ENCODE measurements at regions of chr11 and their contacts with region 1.

Region 1: GRCh38 chr11:2532704-2533586 is 88.1 kb downstream of the KCNQ1 start:
- DNase-seq: peak; percentile 83 to 90 (median 87)
- H3K4me3 ChIP-seq: peak overlapping the region; percentile 45
- H3K4me3 Mint-ChIP-seq: peak overlapping the region; percentile 56 to 87 (median 70)
- H3K27ac ChIP-seq: peak overlapping the region; percentile 12
- H3K27ac Mint-ChIP-seq: peak overlapping the region in 3 of 8 donors; percentile 21 to 48 (median 29)
- H3K4me1 ChIP-seq: peaks cover 18% of the 10 kb centered on the region
- H3K4me1 Mint-ChIP-seq: peaks cover 11 to 15% (median 12%) of the 10 kb centered on the region in 3 donors
- H3K27me3 ChIP-seq: no peaks in the 10 kb centered on the region
- H3K27me3 Mint-ChIP-seq: peaks cover 1 to 2% of the 10 kb centered on the region in 2 donors

Region 2: GRCh38 chr11:2072551-2073261 is 460.2 kb before region 1 on chr11:
- CTCF ChIA-PET with region 1: no interaction called
- POLR2A ChIA-PET with region 1: no interaction called
- DNase-seq: no peak
- H3K4me3 ChIP-seq: no peak overlapping the region
- H3K4me3 Mint-ChIP-seq: no peak overlapping the region
- H3K27ac ChIP-seq: no peak overlapping the region
- H3K27ac Mint-ChIP-seq: no peak overlapping the region
- H3K4me1 ChIP-seq: no peaks in the 10 kb centered on the region
- H3K4me1 Mint-ChIP-seq: peaks cover 8 to 10% (median 8%) of the 10 kb centered on the region in 3 donors
- H3K27me3 ChIP-seq: no peaks in the 10 kb centered on the region
- H3K27me3 Mint-ChIP-seq: peaks cover 16 to 28% of the 10 kb centered on the region in 2 donors

Region 3: GRCh38 chr11:2305140-2305840 is 227.7 kb before region 1 on chr11:
- CTCF ChIA-PET with region 1: interaction called, 26 read pairs
- POLR2A ChIA-PET with region 1: no interaction called
- DNase-seq: peak; percentile 71 to 88 (median 78)
- H3K4me3 ChIP-seq: peak overlapping the region; percentile 70
- H3K4me3 Mint-ChIP-seq: peak overlapping the region; percentile 77 to 98 (median 94)
- H3K27ac ChIP-seq: peak overlapping the region; percentile 67
- H3K27ac Mint-ChIP-seq: peak overlapping the region; percentile 77 to 97 (median 90)
- H3K4me1 ChIP-seq: peaks cover 53% of the 10 kb centered on the region
- H3K4me1 Mint-ChIP-seq: peaks cover 26 to 68% (median 37%) of the 10 kb centered on the region in 3 donors
- H3K27me3 ChIP-seq: no peaks in the 10 kb centered on the region
- H3K27me3 Mint-ChIP-seq: no peaks in the 10 kb centered on the region

Region 4: DNA sequence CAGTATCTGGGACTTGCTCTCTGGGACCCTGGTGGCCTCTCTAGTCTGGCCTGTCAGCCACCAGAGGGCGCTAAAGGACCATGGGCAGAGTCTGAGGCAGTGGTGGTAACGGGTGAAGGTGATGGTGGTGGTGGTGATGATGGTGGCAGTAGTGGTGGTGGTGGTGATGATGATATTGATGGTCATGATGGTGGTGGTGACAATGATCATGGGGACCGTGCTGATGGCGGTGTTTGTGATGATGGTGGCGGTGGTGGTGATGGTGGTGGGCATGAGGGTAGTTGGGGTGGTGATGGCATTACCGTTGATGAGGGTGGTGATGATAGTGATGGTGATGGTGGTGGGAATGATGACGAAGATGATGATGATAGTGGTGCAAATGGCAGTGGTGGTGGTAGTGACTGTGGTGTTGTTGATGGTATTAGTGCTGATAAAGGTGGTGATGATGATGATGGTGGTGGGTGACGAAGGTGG is 104.6 kb before region 1 on chr11:
- CTCF ChIA-PET with region 1: interaction called, 146 read pairs
- POLR2A ChIA-PET with region 1: no interaction called
- DNase-seq: peak; percentile 72 to 90 (median 82)
- H3K4me3 ChIP-seq: no peak overlapping the region
- H3K4me3 Mint-ChIP-seq: no peak overlapping the region
- H3K27ac ChIP-seq: no peak overlapping the region
- H3K27ac Mint-ChIP-seq: no peak overlapping the region
- H3K4me1 ChIP-seq: no peaks in the 10 kb centered on the region
- H3K4me1 Mint-ChIP-seq: no peaks in the 10 kb centered on the region
- H3K27me3 ChIP-seq: no peaks in the 10 kb centered on the region
- H3K27me3 Mint-ChIP-seq: no peaks in the 10 kb centered on the region

Region 5: GRCh38 chr11:2489083-2489482 is 43.9 kb before region 1 on chr11:
- CTCF ChIA-PET with region 1: no interaction called
- POLR2A ChIA-PET with region 1: no interaction called
- DNase-seq: no peak
- H3K4me3 ChIP-seq: no peak overlapping the region
- H3K4me3 Mint-ChIP-seq: no peak overlapping the region
- H3K27ac ChIP-seq: no peak overlapping the region
- H3K27ac Mint-ChIP-seq: no peak overlapping the region
- H3K4me1 ChIP-seq: no peaks in the 10 kb centered on the region
- H3K4me1 Mint-ChIP-seq: no peaks in the 10 kb centered on the region
- H3K27me3 ChIP-seq: no peaks in the 10 kb centered on the region
- H3K27me3 Mint-ChIP-seq: peaks cover 12 to 36% of the 10 kb centered on the region in 2 donors

Region 6: GRCh38 chr11:2885676-2886081 is 352.7 kb after region 1 on chr11 and contains the start of gene CDKN1C:
- CTCF ChIA-PET with region 1: interaction called, 345 read pairs
- POLR2A ChIA-PET with region 1: interaction called, 3 read pairs
- DNase-seq: peak; percentile 79 to 89 (median 85)
- H3K4me3 ChIP-seq: peak within 1 kb of the TSS; percentile 69
- H3K4me3 Mint-ChIP-seq: peak within 1 kb of the TSS; percentile 82 to 95 (median 89)
- H3K27ac ChIP-seq: peak within 1 kb of the TSS; percentile 24
- H3K27ac Mint-ChIP-seq: peak within 1 kb of the TSS in 7 of 8 donors; percentile 61 to 91 (median 74)
- H3K4me1 ChIP-seq: peaks cover 13% of the 10 kb centered on the region
- H3K4me1 Mint-ChIP-seq: peaks cover 9 to 27% (median 26%) of the 10 kb centered on the region in 3 donors
- H3K27me3 ChIP-seq: no peaks in the 10 kb centered on the region
- H3K27me3 Mint-ChIP-seq: no peaks in the 10 kb centered on the region
- total RNA-seq, gene CDKN1C: 1.0 to 1.1 TPM

Region 7: GRCh38 chr11:2901854-2902783 is 369.2 kb after region 1 on chr11:
- CTCF ChIA-PET with region 1: interaction called, 11 read pairs
- POLR2A ChIA-PET with region 1: no interaction called
- DNase-seq: peak; percentile 80 to 92 (median 91)
- H3K4me3 ChIP-seq: peak overlapping the region; percentile 71
- H3K4me3 Mint-ChIP-seq: peak overlapping the region; percentile 71 to 89 (median 78)
- H3K27ac ChIP-seq: peak overlapping the region; percentile 65
- H3K27ac Mint-ChIP-seq: peak overlapping the region; percentile 36 to 96 (median 69)
- H3K4me1 ChIP-seq: peaks cover 43% of the 10 kb centered on the region
- H3K4me1 Mint-ChIP-seq: peaks cover 41 to 59% (median 44%) of the 10 kb centered on the region in 3 donors
- H3K27me3 ChIP-seq: no peaks in the 10 kb centered on the region
- H3K27me3 Mint-ChIP-seq: peaks cover 0 to 1% of the 10 kb centered on the region in 2 donors

Region 8: DNA sequence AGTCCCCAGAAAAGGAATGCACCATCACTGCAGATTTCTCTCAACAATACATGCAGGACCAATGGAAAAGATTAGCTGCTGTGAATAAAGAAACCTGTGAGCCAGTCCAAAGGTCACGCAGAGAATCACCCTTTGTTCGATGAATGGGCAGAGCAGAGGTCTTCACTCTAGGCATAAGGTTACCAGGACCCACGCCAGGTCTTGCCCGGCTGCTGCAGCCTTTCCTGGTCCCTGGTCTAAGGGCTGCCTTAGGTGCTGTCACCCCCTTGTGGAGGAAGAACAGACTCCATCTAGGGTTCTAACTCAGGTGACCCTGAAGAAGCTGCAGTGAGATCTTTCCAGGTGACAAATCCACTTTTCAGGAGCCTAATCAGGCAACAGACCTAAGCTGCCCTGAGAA is 488.2 kb after region 1 on chr11:
- CTCF ChIA-PET with region 1: interaction called, 18 read pairs
- POLR2A ChIA-PET with region 1: no interaction called
- DNase-seq: peak in 3 of 5 donors; percentile 39 to 66 (median 64)
- H3K4me3 ChIP-seq: no peak overlapping the region
- H3K4me3 Mint-ChIP-seq: no peak overlapping the region
- H3K27ac ChIP-seq: no peak overlapping the region
- H3K27ac Mint-ChIP-seq: peak overlapping the region in 1 of 8 donors; percentile 74
- H3K4me1 ChIP-seq: peaks cover 35% of the 10 kb centered on the region
- H3K4me1 Mint-ChIP-seq: peaks cover 19 to 60% (median 47%) of the 10 kb centered on the region in 3 donors
- H3K27me3 ChIP-seq: no peaks in the 10 kb centered on the region
- H3K27me3 Mint-ChIP-seq: no peaks in the 10 kb centered on the region

Measured in CD8-positive, alpha-beta memory T cell (primary cell).